ENCODE measurements at regions of chr2 and their contacts with region 1.

Region 1: DNA sequence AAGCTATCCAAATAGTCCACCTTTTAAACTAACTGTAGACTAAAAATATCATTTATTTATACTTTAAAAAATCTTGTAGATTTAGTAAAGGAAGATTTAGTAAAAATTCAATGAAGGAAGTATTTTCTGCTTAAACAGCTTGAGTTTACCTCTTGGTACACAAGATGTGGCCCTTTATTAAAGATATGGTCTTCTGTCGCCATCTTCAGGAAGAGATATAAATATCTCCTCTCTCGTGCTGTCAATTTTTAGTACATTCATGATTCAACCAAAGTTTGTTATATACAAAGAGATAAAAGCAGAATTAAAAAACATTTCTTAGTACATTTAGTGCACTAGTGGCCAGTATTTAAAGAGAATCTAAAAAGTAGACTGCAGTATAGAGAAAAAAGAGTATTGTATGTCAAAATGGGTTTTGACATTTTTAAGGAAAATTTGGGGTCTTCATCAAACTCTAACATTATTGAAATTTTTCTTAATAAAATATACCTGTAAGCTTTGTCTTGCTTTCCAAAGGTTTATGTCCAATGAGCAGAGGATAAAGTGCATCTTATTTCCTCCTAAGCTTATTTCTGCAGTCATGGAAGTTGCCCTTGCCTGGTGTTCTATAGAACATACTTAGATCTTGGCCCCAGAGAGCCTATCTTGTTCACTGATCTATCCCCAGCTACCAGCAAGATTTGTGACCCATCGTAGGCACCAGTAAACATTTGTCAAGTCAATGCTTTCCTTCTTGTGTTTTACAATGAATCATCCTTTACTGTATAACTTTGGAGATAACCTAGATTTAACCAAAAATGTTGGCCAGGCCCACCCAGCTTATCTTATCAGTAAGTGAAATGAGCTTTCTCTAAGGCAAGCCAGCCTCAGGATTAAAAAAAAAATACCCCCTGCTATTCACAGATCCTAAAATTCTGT is 18.5 kb upstream of the EML6 start:
- DNase-seq: peak; percentile 71
- H3K4me3 ChIP-seq: no peak overlapping the region
- H3K27ac ChIP-seq: no peak overlapping the region
- H3K4me1 ChIP-seq: peaks cover 8% of the 10 kb centered on the region
- H3K27me3 ChIP-seq: peaks cover 0 to 9% of the 10 kb centered on the region in 2 experiments
- CTCF ChIP-seq: peak; percentile 14 to 20
- POLR2A ChIP-seq: no peak

Region 2: DNA sequence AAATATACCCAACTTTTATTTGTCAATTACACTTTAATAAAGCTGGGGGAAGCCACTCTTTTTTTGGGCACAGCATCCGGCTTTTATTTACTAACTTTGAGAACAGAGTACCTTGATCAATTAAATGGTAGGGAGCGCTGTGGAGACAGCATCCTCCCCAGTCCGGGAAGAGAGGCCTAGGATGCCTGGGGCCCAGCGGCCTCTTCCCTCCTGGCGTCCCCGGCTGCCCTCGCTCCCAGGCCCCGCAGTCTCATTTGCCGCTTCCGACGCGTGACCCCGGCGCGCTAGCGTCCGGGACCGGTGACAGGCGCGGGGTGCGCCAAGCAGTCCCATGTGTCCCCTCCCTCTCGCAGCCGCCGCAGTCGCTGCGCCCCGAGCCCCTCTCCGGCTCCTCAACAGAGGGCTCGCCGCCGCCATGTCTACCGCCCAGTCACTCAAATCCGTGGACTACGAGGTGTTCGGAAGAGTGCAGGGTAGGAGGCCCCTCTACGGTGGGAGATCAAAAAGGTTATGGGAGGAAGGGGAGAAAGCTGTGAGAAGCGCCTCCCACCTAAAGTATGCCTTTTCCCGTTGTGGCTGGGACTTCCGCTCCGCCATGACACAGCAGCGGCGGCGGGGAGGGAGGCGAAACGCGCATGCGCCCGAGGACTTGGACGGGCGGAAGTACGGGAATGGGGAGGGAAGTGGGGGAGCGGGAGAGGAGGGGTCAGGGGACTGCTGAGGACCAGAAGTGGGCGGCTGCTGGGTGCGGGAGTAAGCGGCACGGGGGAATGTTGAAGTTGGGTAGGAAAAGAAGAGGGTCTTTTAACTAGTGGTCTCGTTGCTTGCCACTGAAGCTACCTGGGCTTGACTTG is 589.4 kb before region 1 on chr2 and contains the start of gene ACYP2:
- CTCF ChIA-PET with region 1: interaction called, 20 read pairs
- POLR2A ChIA-PET with region 1: no interaction called
- dilution Hi-C with region 1: no loop called
- intact Hi-C with region 1: loop called (anchors 2 kb)
- DNase-seq: peak; percentile 92
- H3K4me3 ChIP-seq: peak within 1 kb of the TSS; percentile 53 to 91 (median 74)
- H3K27ac ChIP-seq: peak within 1 kb of the TSS; percentile 93
- H3K4me1 ChIP-seq: peaks cover 6% of the 10 kb centered on the region
- H3K27me3 ChIP-seq: no peaks in the 10 kb centered on the region
- CTCF ChIP-seq: peak in 1 of 2 donors; percentile 25
- POLR2A ChIP-seq: no peak
- total RNA-seq, gene ACYP2: 5.8 and 7.9 TPM in 2 replicates

Region 3: GRCh38 chr2:54206596-54206995 is 498.4 kb before region 1 on chr2:
- CTCF ChIA-PET with region 1: interaction called, 21 read pairs
- POLR2A ChIA-PET with region 1: no interaction called
- dilution Hi-C with region 1: no loop called
- intact Hi-C with region 1: loop called (anchors 10 kb)
- DNase-seq: peak; percentile 58
- H3K4me3 ChIP-seq: no peak overlapping the region
- H3K27ac ChIP-seq: no peak overlapping the region
- H3K4me1 ChIP-seq: peaks cover 7% of the 10 kb centered on the region
- H3K27me3 ChIP-seq: no peaks in the 10 kb centered on the region
- CTCF ChIP-seq: peak; percentile 29 to 33
- POLR2A ChIP-seq: no peak

Region 4: GRCh38 chr2:54657664-54658083 is 47.3 kb before region 1 on chr2:
- CTCF ChIA-PET with region 1: interaction called, 295 read pairs
- POLR2A ChIA-PET with region 1: no interaction called
- dilution Hi-C with region 1: no loop called
- intact Hi-C with region 1: no loop called
- DNase-seq: peak; percentile 61
- H3K4me3 ChIP-seq: no peak overlapping the region
- H3K27ac ChIP-seq: no peak overlapping the region
- H3K4me1 ChIP-seq: no peaks in the 10 kb centered on the region
- H3K27me3 ChIP-seq: no peaks in the 10 kb centered on the region
- CTCF ChIP-seq: peak; percentile 42 to 58
- POLR2A ChIP-seq: no peak

Region 5: DNA sequence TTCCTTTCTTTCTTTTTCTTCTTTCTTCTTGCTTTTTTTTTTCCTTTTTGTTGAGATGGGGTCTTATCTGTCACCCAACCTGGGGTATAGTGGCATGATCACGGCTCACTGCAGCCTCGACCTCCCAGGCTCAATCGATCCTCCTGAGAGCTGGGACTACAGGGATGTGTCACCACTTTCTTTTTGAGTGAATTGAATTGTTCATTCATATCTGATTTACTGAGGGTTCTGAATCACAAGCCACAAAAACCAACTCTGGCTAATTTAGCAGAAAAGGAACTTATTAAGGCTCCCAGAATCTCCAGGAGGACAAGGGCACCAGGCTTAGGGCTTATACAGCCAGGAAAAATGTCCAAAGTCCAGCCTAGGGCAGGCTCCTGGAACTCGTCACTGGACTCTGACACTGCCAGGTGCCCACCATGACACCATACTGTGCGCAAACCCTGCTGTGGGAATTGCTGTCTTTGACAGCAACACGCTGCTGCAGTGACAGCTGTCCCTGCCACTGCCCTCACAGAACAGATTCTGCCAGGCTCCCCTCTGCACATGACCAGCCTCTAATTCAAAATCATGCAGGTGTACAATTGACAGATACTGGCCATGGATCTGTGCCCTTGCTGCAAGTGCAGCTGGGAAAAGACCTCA is 24.4 kb before region 1 on chr2:
- CTCF ChIA-PET with region 1: interaction called, 22 read pairs
- POLR2A ChIA-PET with region 1: interaction called, 3 read pairs
- dilution Hi-C with region 1: no loop called
- intact Hi-C with region 1: no loop called
- DNase-seq: no peak
- H3K4me3 ChIP-seq: no peak overlapping the region
- H3K27ac ChIP-seq: no peak overlapping the region
- H3K4me1 ChIP-seq: no peaks in the 10 kb centered on the region
- H3K27me3 ChIP-seq: peaks cover 0 to 2% of the 10 kb centered on the region in 2 experiments
- CTCF ChIP-seq: no peak
- POLR2A ChIP-seq: no peak

Region 6: DNA sequence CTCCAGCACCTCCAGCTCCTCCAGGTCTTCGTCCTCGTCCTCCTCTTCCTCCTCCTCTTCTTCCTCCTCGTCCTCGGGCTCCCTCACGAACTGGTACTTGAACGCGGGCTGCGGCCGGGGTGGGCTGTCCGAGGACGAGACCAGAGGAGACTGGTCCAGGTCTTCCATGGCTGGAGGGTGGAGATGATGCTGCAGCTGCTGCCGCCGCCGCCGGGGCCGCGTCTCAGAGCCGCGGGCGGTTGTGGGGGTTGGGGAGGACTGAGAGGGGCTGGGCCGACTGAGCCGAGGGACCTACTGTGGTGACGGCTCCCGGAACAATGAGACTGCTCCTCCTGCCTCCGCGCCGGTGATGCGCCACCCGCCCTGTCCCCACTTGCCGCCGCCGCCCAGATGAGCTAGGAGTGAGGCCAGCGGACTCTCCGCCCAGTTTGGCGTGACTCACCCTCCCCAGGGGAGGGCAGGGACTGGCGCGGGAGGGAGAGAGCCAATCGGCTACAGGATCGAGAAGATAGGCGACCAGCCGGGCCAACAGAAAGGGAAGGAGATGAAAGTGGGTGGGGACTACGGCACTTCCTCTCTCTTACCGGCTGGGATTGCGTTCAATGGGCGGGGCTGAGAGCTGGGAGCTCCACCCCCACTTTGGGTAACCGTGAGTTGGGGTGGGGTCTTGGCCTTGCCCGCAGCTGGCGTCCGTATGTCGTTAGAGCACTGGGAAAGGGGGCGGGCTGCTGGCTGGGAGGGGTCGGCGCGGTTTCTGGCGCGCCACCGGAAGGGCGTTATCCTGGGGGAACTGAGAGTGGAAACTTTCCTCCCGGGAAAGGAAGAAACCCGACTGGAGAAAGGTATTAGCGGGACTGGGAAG is 345.4 kb after region 1 on chr2 and contains the start of gene RTN4:
- CTCF ChIA-PET with region 1: no interaction called
- POLR2A ChIA-PET with region 1: no interaction called
- dilution Hi-C with region 1: no loop called
- intact Hi-C with region 1: no loop called
- DNase-seq: peak; percentile 99
- H3K4me3 ChIP-seq: peak within 1 kb of the TSS; percentile 86 to 99 (median 97)
- H3K27ac ChIP-seq: peak within 1 kb of the TSS; percentile 97
- H3K4me1 ChIP-seq: peaks cover 38% of the 10 kb centered on the region
- H3K27me3 ChIP-seq: no peaks in the 10 kb centered on the region
- CTCF ChIP-seq: peak in 1 of 2 donors; percentile 26
- POLR2A ChIP-seq: peak; percentile 94
- total RNA-seq, gene RTN4: 472 and 486 TPM in 2 replicates